Right lobe of liver (tissue), 6 donors: ENCODE measurements at regions of chr5 and their contacts with region 1.

Region 1: DNA sequence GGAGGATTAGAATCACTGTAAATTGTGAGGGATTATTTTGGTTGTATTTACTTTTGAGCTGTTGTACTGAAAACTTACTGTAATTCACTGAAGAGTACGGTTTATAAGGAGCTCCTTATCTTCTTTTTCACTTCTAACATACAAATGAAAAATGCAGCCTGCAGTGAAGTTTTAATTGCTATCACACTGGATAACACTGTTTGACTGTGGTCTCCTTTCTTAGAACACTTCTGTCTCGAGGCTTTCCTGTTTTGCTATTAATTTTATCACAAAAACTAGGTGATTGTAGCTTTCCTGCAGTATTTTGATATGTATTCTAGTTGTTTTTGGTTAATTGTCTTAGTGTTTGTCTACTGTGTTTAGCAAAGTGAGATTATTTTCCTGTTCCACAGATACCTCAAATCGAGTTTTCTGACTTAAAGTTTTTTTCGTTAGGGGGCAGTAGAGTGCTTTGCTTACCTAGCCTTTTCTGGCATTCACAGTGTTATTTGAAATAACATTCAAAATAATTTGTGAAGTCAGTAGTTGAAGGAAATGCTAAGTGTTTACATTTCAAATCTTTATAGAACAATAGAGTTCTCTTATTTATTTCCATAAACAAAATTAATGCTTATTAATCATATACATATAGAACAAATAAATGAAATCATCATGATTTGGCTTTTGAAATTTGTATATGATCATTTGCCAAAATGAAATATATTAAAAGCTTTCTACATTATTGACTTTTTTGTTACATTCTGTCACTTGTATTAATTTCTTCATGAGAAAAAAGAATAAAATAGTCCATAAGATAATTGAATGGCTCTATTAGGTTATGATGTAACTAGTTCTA is 52.9 kb downstream of the COMMD10 start:
- DNase-seq: no peak
- ATAC-seq: peak; percentile 86 to 94 (median 90)
- H3K4me3 ChIP-seq: no peak overlapping the region
- H3K27ac ChIP-seq: no peak overlapping the region
- H3K4me1 ChIP-seq: no peaks in the 10 kb centered on the region
- H3K27me3 ChIP-seq: no peaks in the 10 kb centered on the region
- CTCF ChIP-seq: peak; percentile 72 to 82 (median 80)
- POLR2A ChIP-seq: no peak

Region 2: DNA sequence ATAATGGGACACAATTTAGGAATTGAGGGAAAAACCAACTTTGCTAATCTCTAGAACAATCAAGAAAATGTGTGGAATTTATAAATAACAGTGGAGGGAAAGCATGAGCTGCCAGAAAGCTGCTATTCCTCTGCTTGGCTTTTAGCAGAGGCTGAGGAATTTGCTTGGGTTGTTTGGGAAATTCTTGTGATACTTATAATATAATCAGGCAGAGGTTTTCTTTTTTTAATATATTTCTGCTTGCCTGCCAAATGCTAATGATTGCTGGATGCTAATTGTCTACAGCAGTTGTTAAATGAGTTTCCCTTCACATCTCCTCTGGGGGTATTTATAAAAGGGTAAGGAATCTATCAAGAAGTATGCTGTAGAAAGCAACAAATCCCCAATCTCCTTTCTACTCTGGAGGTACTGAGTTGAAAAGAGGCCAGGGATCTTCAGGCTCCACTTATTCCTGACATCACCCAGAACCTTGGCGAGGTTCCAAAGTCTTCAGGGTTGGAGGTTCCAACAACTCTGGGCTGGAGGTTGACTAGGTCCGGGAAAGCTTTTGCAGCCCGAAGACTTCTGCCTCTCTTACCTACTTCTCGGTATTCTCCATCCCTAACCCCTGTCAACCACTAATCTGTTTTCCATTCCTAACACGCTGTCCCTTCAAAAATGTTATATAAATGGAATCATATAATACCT is 451.6 kb before region 1 on chr5:
- intact Hi-C with region 1: no loop called
- DNase-seq: no peak
- ATAC-seq: no peak
- H3K4me3 ChIP-seq: no peak overlapping the region
- H3K27ac ChIP-seq: no peak overlapping the region
- H3K4me1 ChIP-seq: no peaks in the 10 kb centered on the region
- H3K27me3 ChIP-seq: no peaks in the 10 kb centered on the region
- CTCF ChIP-seq: no peak
- POLR2A ChIP-seq: no peak

Region 3: GRCh38 chr5:116442095-116442534 is 304.4 kb after region 1 on chr5:
- intact Hi-C with region 1: loop called in 1 of 2 experiments (anchors 10 kb)
- DNase-seq: peak; percentile 74 to 82 (median 74)
- ATAC-seq: peak; percentile 77 to 86 (median 84)
- H3K4me3 ChIP-seq: no peak overlapping the region
- H3K27ac ChIP-seq: no peak overlapping the region
- H3K4me1 ChIP-seq: peaks cover 0 to 6% (median 2%) of the 10 kb centered on the region in 4 donors
- H3K27me3 ChIP-seq: no peaks in the 10 kb centered on the region
- CTCF ChIP-seq: no peak
- POLR2A ChIP-seq: no peak

Region 4: GRCh38 chr5:116492016-116492623 is 354.4 kb after region 1 on chr5:
- intact Hi-C with region 1: no loop called
- DNase-seq: no peak
- ATAC-seq: peak; percentile 46 to 57 (median 48)
- H3K4me3 ChIP-seq: no peak overlapping the region
- H3K27ac ChIP-seq: no peak overlapping the region
- H3K4me1 ChIP-seq: no peaks in the 10 kb centered on the region
- H3K27me3 ChIP-seq: no peaks in the 10 kb centered on the region
- CTCF ChIP-seq: no peak
- POLR2A ChIP-seq: no peak